ENCODE measurements at regions of chr15 and their contacts with region 1.

Region 1: DNA sequence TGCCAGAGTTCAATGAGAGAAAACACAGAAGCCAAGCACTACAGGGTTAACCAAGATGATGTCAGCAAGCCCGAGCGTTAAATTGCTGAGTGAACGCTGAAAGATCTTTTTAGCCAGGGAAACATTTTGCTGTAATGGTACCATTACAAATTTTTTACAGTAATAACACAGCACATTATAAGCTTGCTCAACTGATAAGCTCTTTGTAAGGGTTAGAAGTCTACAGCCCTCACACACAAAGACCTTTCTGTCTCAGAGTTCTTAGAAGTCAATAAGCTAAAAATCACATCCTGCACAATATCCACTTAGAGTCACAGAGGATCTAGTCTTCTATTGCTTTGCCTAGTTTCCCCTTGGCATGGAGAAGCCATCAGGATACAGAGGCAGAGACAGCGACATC is 29.9 kb downstream of the CHSY1 start:
- DNase-seq: no peak
- H3K4me3 ChIP-seq: no peak overlapping the region
- H3K27ac ChIP-seq: no peak overlapping the region
- H3K4me1 ChIP-seq: no peaks in the 10 kb centered on the region
- H3K27me3 ChIP-seq: no peaks in the 10 kb centered on the region

Region 2: DNA sequence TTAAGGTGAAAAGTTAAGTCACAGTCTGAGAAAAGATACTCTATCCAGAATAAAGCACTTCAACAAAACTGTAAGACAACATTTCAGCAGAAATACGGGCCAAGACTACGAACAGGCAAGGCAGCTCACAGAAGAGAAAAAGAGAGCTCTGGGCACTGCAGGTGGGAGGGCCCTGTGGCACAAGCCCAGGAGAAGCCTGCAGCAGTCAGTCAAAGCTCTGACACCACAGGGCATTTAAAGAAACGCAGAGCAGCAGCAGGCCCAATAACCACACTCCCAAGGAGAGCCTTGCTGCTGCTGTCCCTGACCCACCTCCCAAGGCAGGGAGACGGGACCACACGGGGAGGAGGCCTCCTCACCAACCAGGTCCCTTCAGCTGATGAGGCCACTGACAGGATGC is 10.8 kb after region 1 on chr15:
- CTCF ChIA-PET with region 1: interaction called, 10 read pairs
- POLR2A ChIA-PET with region 1: no interaction called
- DNase-seq: no peak
- H3K4me3 ChIP-seq: no peak overlapping the region
- H3K27ac ChIP-seq: no peak overlapping the region
- H3K4me1 ChIP-seq: peaks cover 8 to 32% (median 22%) of the 10 kb centered on the region in 4 experiments
- H3K27me3 ChIP-seq: no peaks in the 10 kb centered on the region

Measured in common myeloid progenitor, CD34-positive (primary cell).